Spleen (tissue), 13 donors: ENCODE measurements at regions of chr16 and their contacts with region 1.

Region 1: DNA sequence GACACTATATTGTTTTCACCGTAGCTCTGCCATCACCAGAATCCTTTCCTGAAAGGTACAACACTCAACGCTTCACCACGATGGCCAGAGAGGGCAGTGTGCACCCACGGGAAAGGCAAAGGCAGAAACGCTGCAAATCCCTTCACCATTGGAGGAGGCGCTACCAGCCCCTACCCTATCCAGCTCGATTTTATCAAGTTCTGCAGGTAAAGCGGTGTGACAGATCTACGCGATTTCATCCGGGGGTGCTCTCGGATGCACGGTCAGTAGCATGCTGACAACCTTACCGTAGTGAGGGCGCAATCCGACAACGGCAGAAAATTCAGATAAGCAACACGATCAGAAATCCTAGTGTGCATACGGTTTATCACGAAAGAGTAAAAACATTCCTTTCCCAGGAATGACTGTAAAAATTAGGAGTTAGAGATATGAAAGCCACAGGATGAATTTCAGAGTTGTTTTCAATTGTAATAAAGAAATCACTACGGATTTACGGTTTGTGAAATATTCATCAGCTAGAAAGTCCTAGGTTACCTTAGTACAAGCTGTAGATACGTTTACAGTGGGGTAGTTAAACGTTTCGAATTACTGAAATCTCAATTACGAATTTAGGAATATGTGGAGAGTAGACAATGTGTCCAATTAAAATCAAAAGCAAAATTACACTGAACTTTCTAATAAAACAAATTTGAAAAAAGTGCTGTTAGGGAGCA is 1.8 kb downstream of the NETO2 start:
- DNase-seq: peak; percentile 93
- H3K4me3 ChIP-seq: peak overlapping the region; percentile 53 to 88 (median 68)
- H3K27ac ChIP-seq: peak overlapping the region; percentile 4 to 90 (median 86)
- H3K4me1 ChIP-seq: peaks cover 3 to 67% (median 30%) of the 10 kb centered on the region in 6 donors
- H3K27me3 ChIP-seq: peaks cover 0 to 38% (median 6%) of the 10 kb centered on the region in 7 donors
- CTCF ChIP-seq: peak; percentile 69 to 92 (median 86)
- POLR2A ChIP-seq: no peak

Region 2: GRCh38 chr16:46973207-46973995 is 168.5 kb before region 1 on chr16 and contains the start of gene DNAJA2:
- intact Hi-C with region 1: loop called (anchors 10 kb)
- DNase-seq: peak; percentile 98
- H3K4me3 ChIP-seq: peak within 1 kb of the TSS; percentile 82 to 94 (median 87)
- H3K27ac ChIP-seq: peak within 1 kb of the TSS; percentile 95 to 99 (median 98)
- H3K4me1 ChIP-seq: peaks cover 30 to 62% (median 46%) of the 10 kb centered on the region in 6 donors
- H3K27me3 ChIP-seq: no peaks in the 10 kb centered on the region
- CTCF ChIP-seq: peak in 5 of 11 experiments; percentile 17 to 35 (median 32)
- POLR2A ChIP-seq: peak; percentile 29 to 78 (median 53)
- total RNA-seq, gene DNAJA2: 45.5 to 61.5 (median 52.1) TPM

Region 3: GRCh38 chr16:47037746-47038458 is 104.0 kb before region 1 on chr16:
- intact Hi-C with region 1: loop called (anchors 5 kb)
- DNase-seq: peak; percentile 98
- H3K4me3 ChIP-seq: peak overlapping the region; percentile 48 to 77 (median 60)
- H3K27ac ChIP-seq: peak overlapping the region; percentile 50 to 86 (median 68)
- H3K4me1 ChIP-seq: peaks cover 0 to 34% (median 11%) of the 10 kb centered on the region in 6 donors
- H3K27me3 ChIP-seq: peaks cover 0 to 12% (median 0%) of the 10 kb centered on the region in 7 donors
- CTCF ChIP-seq: peak; percentile 83 to 99 (median 96)
- POLR2A ChIP-seq: no peak